ENCODE measurements at regions of chr11 and their contacts with region 1.

Region 1: GRCh38 chr11:236774-237767 is at the start of gene PSMD13:
- DNase-seq: peak; percentile 75 to 95 (median 82)
- H3K4me3 ChIP-seq: peak within 1 kb of the TSS; percentile 77 to 100 (median 98)
- H3K27ac ChIP-seq: peak within 1 kb of the TSS; percentile 32 to 98 (median 94)
- H3K27me3 ChIP-seq: no peaks in the 10 kb centered on the region
- CTCF ChIP-seq: peak in 27 of 56 donors; percentile 3 to 56 (median 21)
- total RNA-seq, gene PSMD13: 50.5 to 105 (median 80.8) TPM

Region 2: DNA sequence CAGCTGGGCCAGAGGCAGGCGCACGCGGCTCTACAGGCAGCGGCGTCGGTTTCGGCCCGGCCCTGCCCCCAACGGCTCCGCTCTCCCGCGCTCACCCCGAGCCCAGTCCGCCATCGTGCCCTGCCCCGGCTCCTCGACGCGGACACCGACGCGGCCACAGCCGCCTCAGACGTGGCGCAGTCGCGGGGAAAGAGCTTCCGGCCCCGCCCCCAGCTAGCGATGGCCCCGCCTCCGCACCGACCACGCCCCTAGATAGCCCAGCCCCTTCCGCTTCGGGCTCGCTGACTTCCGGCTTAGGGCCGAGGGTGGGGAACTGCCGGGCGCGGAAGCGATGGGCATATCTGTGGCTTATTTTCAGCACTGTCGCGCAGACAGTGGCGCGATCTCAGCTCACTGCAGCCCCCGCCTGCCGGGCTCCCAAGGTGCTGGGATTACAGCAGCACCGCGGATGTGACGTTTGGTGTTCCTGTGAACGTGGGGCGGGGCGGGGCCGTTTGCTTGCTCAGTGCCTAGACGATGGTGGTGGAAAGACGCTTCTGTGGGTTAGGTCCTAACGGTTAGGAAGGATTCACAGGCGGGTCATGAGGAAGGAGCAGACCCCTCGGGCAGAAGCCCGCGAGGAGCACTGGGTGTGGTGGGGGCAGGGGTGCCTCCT is 29.7 kb before region 1 on chr11 and contains the starts of genes BET1L and RIC8A:
- intact Hi-C with region 1: loop called (anchors 1 kb)
- DNase-seq: peak; percentile 91 to 99 (median 98)
- H3K4me3 ChIP-seq: peak within 1 kb of the TSS; percentile 53 to 100 (median 96)
- H3K27ac ChIP-seq: peak within 1 kb of the TSS; percentile 71 to 99 (median 95)
- H3K27me3 ChIP-seq: no peaks in the 10 kb centered on the region
- CTCF ChIP-seq: peak in 36 of 56 donors; percentile 10 to 59 (median 28)
- total RNA-seq, gene BET1L: 22.9 to 47.4 (median 33.0) TPM
- total RNA-seq, gene RIC8A: 55.0 to 104 (median 78.7) TPM

Region 3: DNA sequence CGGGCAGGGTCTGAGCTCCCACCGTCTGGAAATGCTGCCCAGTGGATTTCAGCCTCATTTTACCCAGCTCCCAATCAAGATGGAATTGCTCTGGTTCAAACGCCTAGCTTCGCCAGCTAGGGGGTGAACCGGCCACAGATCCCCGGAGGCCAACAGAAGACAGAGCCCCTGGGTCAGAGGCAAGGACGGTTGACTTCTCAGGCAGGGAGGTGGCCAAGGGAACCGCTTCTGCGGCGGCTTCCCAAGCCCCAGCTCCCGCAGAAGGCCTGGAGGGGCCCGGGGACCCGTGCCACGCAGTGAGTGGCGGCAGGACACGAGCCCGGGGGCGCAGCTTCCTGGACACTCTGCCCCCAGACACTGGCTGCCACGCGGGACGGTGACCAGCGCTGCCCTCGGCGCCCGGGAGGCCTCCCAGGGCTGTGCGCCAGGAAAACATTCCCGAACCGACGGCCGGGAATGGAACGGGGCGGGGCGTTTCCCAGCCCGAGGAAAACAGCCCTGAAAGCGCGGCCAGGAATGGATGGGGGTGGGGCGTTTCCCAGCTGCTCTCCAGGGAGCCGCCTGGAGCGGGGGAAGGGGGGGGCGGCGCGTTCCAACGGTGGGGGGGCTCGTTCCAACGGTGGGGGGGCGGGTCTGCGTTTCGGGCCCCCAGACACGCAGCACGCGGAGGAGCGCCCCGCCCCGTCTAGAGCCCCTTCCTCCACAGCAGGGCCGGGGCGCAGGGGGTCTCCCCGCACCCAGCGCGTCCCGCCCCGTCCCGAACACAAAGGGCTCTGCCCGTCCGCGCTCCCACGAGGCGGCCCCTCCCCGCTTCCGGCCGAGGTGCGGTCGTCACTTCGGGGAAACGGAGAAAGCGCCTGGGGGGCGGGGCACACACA is 118.7 kb after region 1 on chr11:
- intact Hi-C with region 1: loop called in 1 of 2 experiments (anchors 5 kb)
- DNase-seq: peak in 5 of 10 donors; percentile 58 to 80 (median 64)
- H3K4me3 ChIP-seq: peak overlapping the region; percentile 3 to 63 (median 45)
- H3K27ac ChIP-seq: peak overlapping the region; percentile 50 to 99 (median 95)
- H3K27me3 ChIP-seq: peaks cover 0 to 6% (median 0%) of the 10 kb centered on the region in 45 donors
- CTCF ChIP-seq: peak in 2 of 56 donors; percentile 8 to 20

Region 4: GRCh38 chr11:518463-519250 is 281.6 kb after region 1 on chr11:
- intact Hi-C with region 1: loop called in 1 of 2 experiments (anchors 10 kb)
- DNase-seq: peak; percentile 62 to 85 (median 71)
- H3K4me3 ChIP-seq: peak overlapping the region in 54 of 59 donors; percentile 16 to 63 (median 42)
- H3K27ac ChIP-seq: peak overlapping the region in 46 of 59 donors; percentile 3 to 80 (median 59)
- H3K27me3 ChIP-seq: no peaks in the 10 kb centered on the region
- CTCF ChIP-seq: peak; percentile 74 to 100 (median 98)

Region 5: GRCh38 chr11:606257-606656 is 369.2 kb after region 1 on chr11:
- intact Hi-C with region 1: no loop called
- DNase-seq: peak in 8 of 10 donors; percentile 33 to 88 (median 64)
- H3K4me3 ChIP-seq: no peak overlapping the region
- H3K27ac ChIP-seq: peak overlapping the region in 34 of 59 donors; percentile 5 to 82 (median 49)
- H3K27me3 ChIP-seq: no peaks in the 10 kb centered on the region
- CTCF ChIP-seq: no peak